ENCODE measurements at regions of chr6 and their contacts with region 1.

Region 1: GRCh38 chr6:29847871-29848630 is 20.4 kb downstream of the HLA-G start:
- DNase-seq: peak; percentile 82
- H3K4me3 ChIP-seq: no peak overlapping the region
- H3K27ac ChIP-seq: no peak overlapping the region
- H3K4me1 ChIP-seq: peaks cover 4% of the 10 kb centered on the region
- H3K27me3 ChIP-seq: no peaks in the 10 kb centered on the region
- CTCF ChIP-seq: peak; percentile 93

Region 2: GRCh38 chr6:29509239-29509638 is 338.8 kb before region 1 on chr6:
- intact Hi-C with region 1: no loop called
- DNase-seq: no peak
- H3K4me3 ChIP-seq: no peak overlapping the region
- H3K27ac ChIP-seq: no peak overlapping the region
- H3K4me1 ChIP-seq: no peaks in the 10 kb centered on the region
- H3K27me3 ChIP-seq: no peaks in the 10 kb centered on the region
- CTCF ChIP-seq: no peak

Region 3: GRCh38 chr6:29696155-29697125 is 151.6 kb before region 1 on chr6:
- intact Hi-C with region 1: no loop called
- DNase-seq: no peak
- H3K4me3 ChIP-seq: no peak overlapping the region
- H3K27ac ChIP-seq: no peak overlapping the region
- H3K4me1 ChIP-seq: no peaks in the 10 kb centered on the region
- H3K27me3 ChIP-seq: no peaks in the 10 kb centered on the region
- CTCF ChIP-seq: no peak

Region 4: GRCh38 chr6:30013291-30013922 is 165.4 kb after region 1 on chr6:
- intact Hi-C with region 1: loop called (anchors 2 kb)
- DNase-seq: no peak
- H3K4me3 ChIP-seq: no peak overlapping the region
- H3K27ac ChIP-seq: no peak overlapping the region
- H3K4me1 ChIP-seq: no peaks in the 10 kb centered on the region
- H3K27me3 ChIP-seq: no peaks in the 10 kb centered on the region
- CTCF ChIP-seq: peak; percentile 90

Region 5: GRCh38 chr6:30447237-30447636 is 599.2 kb after region 1 on chr6:
- intact Hi-C with region 1: no loop called
- DNase-seq: no peak
- H3K4me3 ChIP-seq: no peak overlapping the region
- H3K27ac ChIP-seq: no peak overlapping the region
- H3K4me1 ChIP-seq: no peaks in the 10 kb centered on the region
- H3K27me3 ChIP-seq: peaks cover 87% of the 10 kb centered on the region
- CTCF ChIP-seq: no peak